CD4-positive, alpha-beta memory T cell (primary cell): ENCODE measurements at regions of chr3 and their contacts with region 1.

Region 1: DNA sequence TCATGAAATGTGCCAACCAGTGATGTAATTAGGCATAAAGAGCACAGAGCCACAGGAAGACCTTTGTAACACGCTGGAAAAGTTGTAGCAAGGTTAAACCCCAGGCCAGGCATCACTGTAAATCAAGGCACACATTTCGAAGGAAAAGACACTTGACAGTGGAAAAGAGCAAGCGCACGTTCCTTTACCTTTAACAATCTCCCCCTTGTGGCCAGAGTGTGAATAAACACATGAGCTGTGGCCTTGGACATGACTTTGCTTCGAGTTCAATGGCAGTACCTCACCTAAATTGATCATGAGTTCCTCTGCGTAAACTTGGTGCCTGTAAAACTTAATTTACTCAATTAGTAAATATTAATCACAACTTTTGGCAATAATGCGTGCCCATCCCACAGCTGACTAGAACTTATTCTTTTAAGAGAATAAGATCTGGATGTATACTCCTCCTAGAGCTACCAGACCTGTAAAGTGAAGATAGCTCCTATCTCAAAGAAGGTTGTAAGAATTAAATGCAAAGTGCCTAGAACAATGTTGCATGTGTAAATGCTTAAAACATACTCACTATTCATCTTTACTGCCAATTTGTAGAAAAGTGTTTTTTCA is 757.0 kb upstream of the NECTIN3 start:
- DNase-seq: peak; percentile 55 to 67 (median 63)
- H3K4me3 ChIP-seq: no peak overlapping the region
- H3K4me3 Mint-ChIP-seq: peak overlapping the region in 1 of 8 donors; percentile 0
- H3K27ac ChIP-seq: no peak overlapping the region
- H3K27ac Mint-ChIP-seq: no peak overlapping the region
- H3K4me1 ChIP-seq: no peaks in the 10 kb centered on the region
- H3K4me1 Mint-ChIP-seq: peaks cover 0 to 7% (median 4%) of the 10 kb centered on the region in 4 donors
- H3K27me3 ChIP-seq: no peaks in the 10 kb centered on the region
- H3K27me3 Mint-ChIP-seq: peaks cover 0 to under 1% of the 10 kb centered on the region in 2 donors

Region 2: DNA sequence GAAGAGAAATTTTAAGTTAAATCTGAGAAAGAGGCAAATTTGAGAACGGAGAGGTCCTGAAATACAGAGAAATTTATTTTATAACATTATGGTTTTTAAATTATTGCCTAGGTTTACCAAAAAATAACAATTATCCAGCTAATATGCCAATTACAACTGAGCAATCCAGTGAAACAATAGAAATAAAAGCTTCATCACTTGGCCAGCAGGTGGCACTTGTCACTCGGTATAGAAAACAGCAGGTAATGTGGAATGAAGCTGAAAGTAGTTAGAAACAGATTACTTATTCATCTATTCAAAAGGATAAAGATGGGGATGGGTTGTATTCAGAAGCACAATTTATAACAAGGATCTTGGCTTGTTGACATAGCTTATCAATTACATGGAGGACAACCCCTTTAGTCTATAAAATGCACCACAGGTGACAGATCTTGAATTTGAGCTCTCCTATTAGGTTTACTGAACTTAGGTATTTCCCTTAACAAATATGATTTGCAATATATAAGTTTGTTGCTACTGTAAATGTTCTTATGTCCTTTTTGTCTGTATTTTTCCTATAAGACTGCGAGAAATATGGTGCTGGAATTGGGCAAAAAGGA is 1290.9 kb before region 1 on chr3:
- CTCF ChIA-PET with region 1: interaction called, 3 read pairs
- POLR2A ChIA-PET with region 1: no interaction called
- intact Hi-C with region 1: loop called (anchors 10 kb)
- DNase-seq: peak in 4 of 5 donors; percentile 29 to 40 (median 34)
- H3K4me3 ChIP-seq: no peak overlapping the region
- H3K4me3 Mint-ChIP-seq: no peak overlapping the region
- H3K27ac ChIP-seq: no peak overlapping the region
- H3K27ac Mint-ChIP-seq: no peak overlapping the region
- H3K4me1 ChIP-seq: no peaks in the 10 kb centered on the region
- H3K4me1 Mint-ChIP-seq: peaks cover 0 to 2% (median 0%) of the 10 kb centered on the region in 4 donors
- H3K27me3 ChIP-seq: no peaks in the 10 kb centered on the region
- H3K27me3 Mint-ChIP-seq: peaks cover under 1 to 4% of the 10 kb centered on the region in 2 donors

Region 3: DNA sequence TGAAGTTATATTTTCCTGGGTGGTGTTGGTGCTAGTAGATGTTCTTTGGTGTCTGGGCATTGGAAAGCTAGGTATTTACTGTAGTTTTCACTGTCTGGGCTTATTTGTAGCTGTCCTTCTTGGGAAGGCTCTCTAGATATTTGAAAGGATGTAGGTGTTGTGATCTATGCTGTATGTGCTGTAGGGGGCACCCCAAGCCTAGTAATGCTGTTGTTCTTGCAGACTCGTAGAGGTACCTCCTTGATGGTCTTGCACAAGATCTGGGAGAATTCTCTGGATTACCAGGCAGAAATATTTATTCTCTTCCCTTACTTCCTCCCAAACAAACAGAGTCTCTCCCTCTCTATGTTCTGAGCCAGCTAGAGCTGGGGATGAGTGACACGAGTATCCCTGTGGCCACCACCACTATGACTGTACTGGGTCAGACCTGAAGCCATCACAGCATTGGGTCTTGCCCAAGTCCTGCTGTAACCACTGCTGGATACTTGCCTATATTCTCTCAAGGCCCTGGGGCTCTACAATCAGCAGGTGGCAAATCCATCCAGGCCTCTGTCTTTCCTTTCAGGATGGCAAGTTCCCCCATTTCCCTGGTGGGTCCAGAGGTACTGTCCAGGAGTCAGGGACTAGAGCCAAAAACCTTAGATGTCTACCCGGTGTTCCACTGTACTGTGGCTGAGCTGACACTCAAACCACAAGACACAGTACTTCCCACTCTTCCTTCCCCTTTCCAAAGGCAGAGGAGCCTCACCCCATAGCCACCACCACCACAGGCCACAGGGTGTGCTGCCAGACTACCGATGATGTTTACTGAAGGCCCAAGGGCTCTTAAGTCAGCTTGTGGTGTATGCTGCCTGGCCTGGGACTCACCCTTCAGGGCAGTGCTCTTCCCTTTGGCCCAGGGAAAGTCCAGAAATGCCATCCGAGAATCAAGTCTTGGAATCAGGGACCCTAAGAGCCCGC is 782.1 kb before region 1 on chr3:
- CTCF ChIA-PET with region 1: interaction called, 7 read pairs
- POLR2A ChIA-PET with region 1: no interaction called
- intact Hi-C with region 1: loop called (anchors 1 kb)
- DNase-seq: peak; percentile 21 to 50 (median 41)
- H3K4me3 ChIP-seq: no peak overlapping the region
- H3K4me3 Mint-ChIP-seq: no peak overlapping the region
- H3K27ac ChIP-seq: no peak overlapping the region
- H3K27ac Mint-ChIP-seq: no peak overlapping the region
- H3K4me1 ChIP-seq: no peaks in the 10 kb centered on the region
- H3K4me1 Mint-ChIP-seq: no peaks in the 10 kb centered on the region
- H3K27me3 ChIP-seq: no peaks in the 10 kb centered on the region
- H3K27me3 Mint-ChIP-seq: peaks cover 2 to 3% of the 10 kb centered on the region in 2 donors

Region 4: DNA sequence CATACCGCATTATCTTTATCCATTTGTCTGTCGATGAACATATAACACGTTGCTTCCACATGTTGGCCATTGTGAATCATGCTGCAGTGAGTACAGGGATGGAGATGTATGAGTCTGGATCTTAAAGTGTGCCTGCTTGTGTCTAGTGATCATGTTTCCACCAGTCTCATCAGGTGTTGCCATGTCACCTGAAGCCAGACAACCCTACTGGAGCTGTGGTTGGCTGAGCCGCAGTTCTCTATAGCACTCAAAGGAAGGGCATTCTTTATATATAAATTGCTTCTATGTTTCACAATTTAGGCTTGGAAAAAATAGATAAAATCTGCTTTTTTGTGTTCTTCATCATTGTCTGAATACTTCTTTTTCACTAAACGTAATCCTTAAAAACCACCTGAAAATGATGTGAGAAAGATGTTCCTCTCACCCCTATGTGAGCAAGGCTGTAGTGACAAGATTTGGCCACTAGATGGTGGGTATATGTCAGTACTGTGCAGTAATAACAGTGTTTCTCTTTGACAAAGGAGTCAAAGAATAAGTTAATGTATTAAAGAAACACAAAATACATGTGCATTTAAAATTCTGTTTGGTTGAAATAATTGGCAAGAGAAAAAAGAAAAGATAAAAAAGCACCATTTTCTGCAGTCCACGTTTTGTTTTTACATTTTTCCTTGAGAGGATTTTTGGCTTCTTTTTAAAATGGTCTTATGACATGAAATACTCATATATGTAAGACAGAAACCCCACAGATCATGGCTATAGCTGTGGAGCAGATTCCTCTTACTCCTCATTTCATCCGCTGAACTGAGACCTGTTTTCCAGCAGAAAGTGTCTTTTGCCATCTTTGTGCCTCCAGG is 582.8 kb before region 1 on chr3:
- CTCF ChIA-PET with region 1: interaction called, 35 read pairs
- POLR2A ChIA-PET with region 1: no interaction called
- intact Hi-C with region 1: loop called (anchors 1 kb)
- DNase-seq: peak; percentile 58 to 66 (median 62)
- H3K4me3 ChIP-seq: no peak overlapping the region
- H3K4me3 Mint-ChIP-seq: no peak overlapping the region
- H3K27ac ChIP-seq: no peak overlapping the region
- H3K27ac Mint-ChIP-seq: no peak overlapping the region
- H3K4me1 ChIP-seq: peaks cover 9% of the 10 kb centered on the region
- H3K4me1 Mint-ChIP-seq: peaks cover 5 to 12% (median 10%) of the 10 kb centered on the region in 4 donors
- H3K27me3 ChIP-seq: no peaks in the 10 kb centered on the region
- H3K27me3 Mint-ChIP-seq: no peaks in the 10 kb centered on the region

Region 5: DNA sequence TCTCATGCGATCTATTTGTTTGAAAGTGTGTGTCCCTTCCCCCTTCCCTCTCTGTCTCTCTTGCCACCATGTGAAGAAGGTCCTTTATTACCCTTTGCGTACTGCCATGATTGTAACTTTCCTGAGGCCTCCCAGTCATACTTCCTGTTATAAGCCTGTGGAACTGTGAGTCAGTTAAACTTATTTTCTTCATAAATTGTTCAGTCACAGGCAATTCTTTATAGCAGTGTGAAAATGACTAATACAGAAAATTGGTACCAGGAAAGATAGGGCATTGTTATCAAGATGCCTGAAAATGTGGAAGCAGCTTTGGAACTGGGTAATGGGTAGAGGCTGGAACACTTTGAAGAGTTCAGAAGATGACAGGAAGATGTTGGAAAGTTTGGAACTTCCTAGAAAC is 13.3 kb after region 1 on chr3:
- CTCF ChIA-PET with region 1: interaction called, 26 read pairs
- POLR2A ChIA-PET with region 1: no interaction called
- intact Hi-C with region 1: no loop called
- DNase-seq: no peak
- H3K4me3 ChIP-seq: no peak overlapping the region
- H3K4me3 Mint-ChIP-seq: no peak overlapping the region
- H3K27ac ChIP-seq: no peak overlapping the region
- H3K27ac Mint-ChIP-seq: no peak overlapping the region
- H3K4me1 ChIP-seq: no peaks in the 10 kb centered on the region
- H3K4me1 Mint-ChIP-seq: no peaks in the 10 kb centered on the region
- H3K27me3 ChIP-seq: no peaks in the 10 kb centered on the region
- H3K27me3 Mint-ChIP-seq: peaks cover 0 to under 1% of the 10 kb centered on the region in 2 donors

Region 6: GRCh38 chr3:110485389-110485788 is 170.8 kb after region 1 on chr3:
- CTCF ChIA-PET with region 1: no interaction called
- POLR2A ChIA-PET with region 1: no interaction called
- intact Hi-C with region 1: no loop called
- DNase-seq: no peak
- H3K4me3 ChIP-seq: no peak overlapping the region
- H3K4me3 Mint-ChIP-seq: no peak overlapping the region
- H3K27ac ChIP-seq: no peak overlapping the region
- H3K27ac Mint-ChIP-seq: no peak overlapping the region
- H3K4me1 ChIP-seq: no peaks in the 10 kb centered on the region
- H3K4me1 Mint-ChIP-seq: no peaks in the 10 kb centered on the region
- H3K27me3 ChIP-seq: no peaks in the 10 kb centered on the region
- H3K27me3 Mint-ChIP-seq: peaks cover 0 to 1% of the 10 kb centered on the region in 2 donors

Region 7: DNA sequence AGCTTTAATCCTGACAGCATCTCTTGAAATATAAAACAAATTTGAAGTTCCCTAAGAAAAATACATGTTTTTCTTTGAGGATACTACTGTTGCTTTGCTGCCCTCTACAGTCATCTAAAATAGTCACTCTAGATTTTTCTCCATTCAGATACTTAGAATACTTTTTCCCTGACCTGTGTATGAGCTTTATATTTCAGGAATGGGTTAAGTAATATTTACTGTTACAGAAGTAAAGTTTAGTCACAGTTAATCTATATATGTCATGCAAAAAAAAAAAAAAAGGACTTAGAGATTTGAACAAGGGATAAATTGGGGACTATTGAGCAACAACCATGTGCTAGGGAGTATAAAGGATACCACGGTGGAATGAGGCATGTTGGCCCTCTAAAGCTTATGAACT is 765.8 kb after region 1 on chr3:
- CTCF ChIA-PET with region 1: interaction called, 8 read pairs
- POLR2A ChIA-PET with region 1: no interaction called
- intact Hi-C with region 1: loop called (anchors 2 kb)
- DNase-seq: no peak
- H3K4me3 ChIP-seq: no peak overlapping the region
- H3K4me3 Mint-ChIP-seq: no peak overlapping the region
- H3K27ac ChIP-seq: no peak overlapping the region
- H3K27ac Mint-ChIP-seq: no peak overlapping the region
- H3K4me1 ChIP-seq: no peaks in the 10 kb centered on the region
- H3K4me1 Mint-ChIP-seq: peaks cover under 1 to 8% (median 3%) of the 10 kb centered on the region in 4 donors
- H3K27me3 ChIP-seq: no peaks in the 10 kb centered on the region
- H3K27me3 Mint-ChIP-seq: no peaks in the 10 kb centered on the region